Heart right ventricle (tissue), 16 donors: ENCODE measurements at regions of chr3 and their contacts with region 1.

Region 1: DNA sequence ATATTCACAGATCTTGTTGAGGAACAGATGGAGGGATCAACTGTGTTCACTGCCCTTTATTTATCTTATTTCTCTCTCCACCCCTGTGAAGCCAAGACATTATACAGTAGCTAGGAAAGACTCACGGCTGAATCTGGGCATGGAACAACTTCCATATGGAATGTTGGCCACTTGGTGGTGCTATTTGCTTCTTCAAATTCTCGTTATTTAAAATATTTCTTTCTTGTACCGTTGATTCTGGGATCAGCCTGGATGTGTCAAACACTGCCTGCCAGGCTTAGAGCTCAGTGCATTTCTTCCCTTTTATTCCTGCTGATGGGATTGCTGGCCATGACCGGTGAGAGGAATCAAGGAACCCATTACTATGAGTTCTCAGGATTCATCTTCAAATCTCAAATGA is 17.5 kb upstream of the GASK1A start:
- DNase-seq: peak in 1 of 2 donors; percentile 38
- ATAC-seq: peak in 5 of 8 donors; percentile 48 to 67 (median 61)
- H3K4me3 ChIP-seq: no peak overlapping the region
- H3K27ac ChIP-seq: no peak overlapping the region
- H3K4me1 ChIP-seq: no peaks in the 10 kb centered on the region
- H3K27me3 ChIP-seq: no peaks in the 10 kb centered on the region
- CTCF ChIP-seq: peak; percentile 41 to 78 (median 70)

Region 2: GRCh38 chr3:42906070-42906847 is 55.4 kb before region 1 on chr3 and contains the start of gene ZNF662:
- intact Hi-C with region 1: no loop called
- DNase-seq: peak; percentile 57 to 64
- ATAC-seq: peak; percentile 90 to 94 (median 92)
- H3K4me3 ChIP-seq: peak within 1 kb of the TSS; percentile 52 to 85 (median 71)
- H3K27ac ChIP-seq: peak within 1 kb of the TSS in 9 of 10 donors; percentile 53 to 77 (median 71)
- H3K4me1 ChIP-seq: peaks cover 0 to 22% (median 18%) of the 10 kb centered on the region in 9 donors
- H3K27me3 ChIP-seq: peaks cover 0 to 22% (median 0%) of the 10 kb centered on the region in 7 donors
- CTCF ChIP-seq: peak in 1 of 9 donors; percentile 3
- total RNA-seq, gene ZNF662: 3.7 to 6.9 (median 5.5) TPM

Region 3: DNA sequence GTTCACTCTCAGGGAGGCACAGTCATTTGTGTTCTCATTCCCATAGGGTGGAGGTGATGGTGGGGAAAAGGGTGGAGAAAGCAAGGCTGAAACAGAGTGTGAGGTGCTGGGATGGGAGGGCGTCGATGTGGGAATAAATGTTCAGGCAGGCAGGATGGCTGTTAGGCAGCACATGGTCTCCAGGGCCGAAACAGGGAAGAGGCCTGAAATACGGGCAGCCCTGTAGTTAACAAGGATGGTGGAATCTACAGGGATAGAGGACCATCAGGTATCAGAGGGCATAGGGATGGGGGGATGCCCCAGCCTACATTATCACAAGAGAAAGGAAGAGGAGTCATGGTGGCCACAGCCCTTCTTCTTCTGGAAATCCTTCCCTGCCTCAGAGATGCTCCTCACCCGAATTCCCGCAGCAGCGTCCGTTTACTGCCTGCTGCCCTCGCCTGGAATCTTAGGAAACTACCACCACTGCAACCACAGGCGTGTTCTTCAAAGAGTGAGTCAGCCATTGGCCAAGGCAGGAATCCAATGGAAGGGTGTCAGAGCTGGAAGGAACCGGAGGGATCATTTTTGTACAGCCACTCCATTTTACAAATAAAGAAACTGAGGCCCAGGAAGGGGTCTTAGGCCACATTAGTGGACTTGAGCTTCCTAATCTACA is 194.0 kb after region 1 on chr3:
- intact Hi-C with region 1: loop called (anchors 1 to 5 kb)
- DNase-seq: peak; percentile 48 to 57
- ATAC-seq: peak; percentile 56 to 83 (median 76)
- H3K4me3 ChIP-seq: no peak overlapping the region
- H3K27ac ChIP-seq: peak overlapping the region in 1 of 10 donors; percentile 41
- H3K4me1 ChIP-seq: peaks cover 0 to 22% (median 0%) of the 10 kb centered on the region in 9 donors
- H3K27me3 ChIP-seq: peaks cover 0 to 14% (median 2%) of the 10 kb centered on the region in 7 donors
- CTCF ChIP-seq: peak; percentile 25 to 69 (median 65)

Region 4: GRCh38 chr3:43477600-43477999 is 516.0 kb after region 1 on chr3:
- intact Hi-C with region 1: no loop called
- DNase-seq: peak; percentile 23 to 52
- ATAC-seq: peak; percentile 76 to 94 (median 88)
- H3K4me3 ChIP-seq: no peak overlapping the region
- H3K27ac ChIP-seq: peak overlapping the region in 9 of 10 donors; percentile 13 to 87 (median 54)
- H3K4me1 ChIP-seq: peaks cover 0 to 34% (median 15%) of the 10 kb centered on the region in 9 donors
- H3K27me3 ChIP-seq: no peaks in the 10 kb centered on the region
- CTCF ChIP-seq: no peak

Region 5: GRCh38 chr3:44198284-44199269 is 1236.9 kb after region 1 on chr3:
- intact Hi-C with region 1: loop called in 1 of 10 experiments (anchors 10 kb)
- DNase-seq: peak; percentile 18 to 78
- ATAC-seq: peak in 6 of 8 donors; percentile 73 to 82 (median 80)
- H3K4me3 ChIP-seq: no peak overlapping the region
- H3K27ac ChIP-seq: no peak overlapping the region
- H3K4me1 ChIP-seq: no peaks in the 10 kb centered on the region
- H3K27me3 ChIP-seq: peaks cover 0 to 42% (median 10%) of the 10 kb centered on the region in 7 donors
- CTCF ChIP-seq: peak; percentile 60 to 86 (median 82)